ENCODE measurements at regions of chr14 and their contacts with region 1.

Region 1: GRCh38 chr14:21383848-21384493 is at the start of gene SUPT16H:
- DNase-seq: peak; percentile 98
- H3K4me3 Mint-ChIP-seq: peak within 1 kb of the TSS; percentile 94
- H3K27ac Mint-ChIP-seq: peak within 1 kb of the TSS; percentile 99
- H3K4me1 Mint-ChIP-seq: peaks cover 35% of the 10 kb centered on the region
- H3K27me3 Mint-ChIP-seq: no peaks in the 10 kb centered on the region
- total RNA-seq, gene SUPT16H: 170 and 174 TPM in 2 replicates

Region 2: GRCh38 chr14:20866963-20867362 is 517.0 kb before region 1 on chr14:
- intact Hi-C with region 1: no loop called
- DNase-seq: no peak
- H3K4me3 Mint-ChIP-seq: no peak overlapping the region
- H3K27ac Mint-ChIP-seq: no peak overlapping the region
- H3K4me1 Mint-ChIP-seq: no peaks in the 10 kb centered on the region
- H3K27me3 Mint-ChIP-seq: peaks cover 42% of the 10 kb centered on the region

Region 3: DNA sequence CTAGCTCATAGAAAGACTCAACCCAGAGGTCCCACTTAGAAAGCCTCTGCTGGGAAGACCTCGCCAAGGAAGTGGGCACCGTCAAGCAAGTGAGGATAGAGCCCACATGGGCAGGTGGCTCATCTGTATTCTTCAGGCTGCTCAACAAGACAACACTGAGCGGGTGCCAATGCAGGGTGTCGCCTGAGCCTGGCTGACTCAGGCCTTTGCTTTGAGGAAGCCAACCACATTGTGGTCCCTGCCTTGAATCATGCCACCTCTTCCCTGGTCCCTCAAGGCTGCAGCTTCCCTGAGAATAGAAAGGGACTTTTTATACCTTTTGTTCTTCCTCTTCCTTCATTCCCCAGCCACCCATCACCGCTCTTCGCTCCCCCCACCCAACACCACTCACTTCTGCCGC is 347.2 kb before region 1 on chr14:
- intact Hi-C with region 1: no loop called
- DNase-seq: no peak
- H3K4me3 Mint-ChIP-seq: no peak overlapping the region
- H3K27ac Mint-ChIP-seq: no peak overlapping the region
- H3K4me1 Mint-ChIP-seq: no peaks in the 10 kb centered on the region
- H3K27me3 Mint-ChIP-seq: peaks cover 17% of the 10 kb centered on the region

Region 4: DNA sequence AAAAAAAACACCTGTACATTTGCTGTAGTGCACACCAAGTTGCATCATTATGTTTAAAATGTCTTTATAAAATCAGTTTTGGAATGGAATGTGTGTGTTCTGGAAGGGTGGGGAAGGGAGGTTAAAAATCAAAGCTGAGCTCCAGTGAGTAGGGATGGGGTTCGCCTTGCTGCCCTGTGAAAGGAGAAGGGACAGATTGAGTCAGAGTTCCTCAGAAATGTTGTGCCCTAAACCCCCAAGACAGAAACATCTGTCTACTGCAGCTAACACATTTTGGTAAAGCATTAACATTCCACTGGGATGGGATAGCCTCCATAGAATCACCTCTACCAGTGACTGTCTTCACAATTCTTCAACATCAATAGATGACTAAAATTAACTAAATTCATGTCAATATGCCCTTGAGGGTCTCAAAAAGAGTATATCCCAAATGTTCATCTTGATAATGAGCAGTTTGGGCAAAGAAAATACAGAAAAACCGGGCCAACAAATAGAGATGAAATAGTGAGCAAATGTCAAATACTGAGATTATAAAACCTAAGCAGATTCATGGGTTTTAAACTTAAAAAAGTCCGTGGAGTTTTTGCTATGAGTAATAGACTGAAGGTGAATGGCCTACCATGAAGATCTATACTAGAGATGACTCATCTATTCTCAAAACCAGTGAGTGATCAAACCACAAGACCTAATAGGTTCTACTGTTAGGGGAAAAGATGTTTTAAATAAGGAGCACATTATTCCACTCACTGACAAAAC is 120.1 kb before region 1 on chr14:
- intact Hi-C with region 1: loop called (anchors 1 kb)
- DNase-seq: peak; percentile 64
- H3K4me3 Mint-ChIP-seq: peak overlapping the region; percentile 92
- H3K27ac Mint-ChIP-seq: peak overlapping the region; percentile 97
- H3K4me1 Mint-ChIP-seq: peaks cover 58% of the 10 kb centered on the region
- H3K27me3 Mint-ChIP-seq: no peaks in the 10 kb centered on the region

Region 5: GRCh38 chr14:21308479-21309237 is 75.3 kb before region 1 on chr14:
- intact Hi-C with region 1: loop called (anchors 1 kb)
- DNase-seq: peak; percentile 91
- H3K4me3 Mint-ChIP-seq: peak overlapping the region; percentile 78
- H3K27ac Mint-ChIP-seq: peak overlapping the region; percentile 81
- H3K4me1 Mint-ChIP-seq: peaks cover 14% of the 10 kb centered on the region
- H3K27me3 Mint-ChIP-seq: peaks cover 5% of the 10 kb centered on the region

Region 6: GRCh38 chr14:21437063-21437901 is 53.3 kb after region 1 on chr14:
- intact Hi-C with region 1: loop called (anchors 1 kb)
- DNase-seq: peak; percentile 100
- H3K4me3 Mint-ChIP-seq: peak overlapping the region; percentile 90
- H3K27ac Mint-ChIP-seq: peak overlapping the region; percentile 77
- H3K4me1 Mint-ChIP-seq: peaks cover 50% of the 10 kb centered on the region
- H3K27me3 Mint-ChIP-seq: no peaks in the 10 kb centered on the region

Region 7: GRCh38 chr14:21476925-21477681 is 93.1 kb after region 1 on chr14 and contains the starts of genes RAB2B and TOX4:
- intact Hi-C with region 1: loop called (anchors 1 kb)
- DNase-seq: peak; percentile 99
- H3K4me3 Mint-ChIP-seq: peak within 1 kb of the TSS; percentile 99
- H3K27ac Mint-ChIP-seq: peak within 1 kb of the TSS; percentile 99
- H3K4me1 Mint-ChIP-seq: peaks cover 23% of the 10 kb centered on the region
- H3K27me3 Mint-ChIP-seq: no peaks in the 10 kb centered on the region
- total RNA-seq, gene RAB2B: 26.5 and 30.1 TPM in 2 replicates
- total RNA-seq, gene TOX4: 75.9 and 82.8 TPM in 2 replicates

Region 8: GRCh38 chr14:21557084-21557901 is 173.3 kb after region 1 on chr14:
- intact Hi-C with region 1: loop called (anchors 2 kb)
- DNase-seq: peak; percentile 93
- H3K4me3 Mint-ChIP-seq: peak overlapping the region; percentile 41
- H3K27ac Mint-ChIP-seq: no peak overlapping the region
- H3K4me1 Mint-ChIP-seq: peaks cover 5% of the 10 kb centered on the region
- H3K27me3 Mint-ChIP-seq: no peaks in the 10 kb centered on the region

Region 9: DNA sequence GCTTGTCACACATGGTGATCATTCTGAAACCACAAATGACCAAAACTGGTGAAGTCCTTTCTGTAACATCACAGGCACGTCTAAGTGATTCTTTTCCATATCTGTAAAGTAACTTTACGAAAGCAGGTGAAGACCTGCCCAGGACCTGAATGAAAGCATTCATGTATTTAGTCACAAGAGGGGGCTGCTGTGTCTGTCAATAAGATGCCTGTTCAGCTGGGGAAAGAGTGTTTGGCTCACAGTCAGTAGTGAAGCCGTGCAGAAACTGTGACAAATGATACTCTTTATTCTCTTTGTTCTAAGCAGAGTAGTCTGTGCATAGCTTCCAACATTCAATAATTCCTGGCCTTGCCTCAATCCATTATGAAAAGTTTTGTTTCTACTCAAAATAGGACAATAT is 663.1 kb after region 1 on chr14:
- intact Hi-C with region 1: no loop called
- DNase-seq: peak; percentile 82
- H3K4me3 Mint-ChIP-seq: peak overlapping the region; percentile 79
- H3K27ac Mint-ChIP-seq: peak overlapping the region; percentile 81
- H3K4me1 Mint-ChIP-seq: peaks cover 35% of the 10 kb centered on the region
- H3K27me3 Mint-ChIP-seq: peaks cover 3% of the 10 kb centered on the region